Activated CD4-positive, alpha-beta T cell treated with anti-CD3 and anti-CD28 coated beads, Interleukin-2, amount 10 ng/mL, durations not matched to agents 24 days and 14 days (primary cell): ENCODE measurements at regions of chr18 and their contacts with region 1.

Region 1: DNA sequence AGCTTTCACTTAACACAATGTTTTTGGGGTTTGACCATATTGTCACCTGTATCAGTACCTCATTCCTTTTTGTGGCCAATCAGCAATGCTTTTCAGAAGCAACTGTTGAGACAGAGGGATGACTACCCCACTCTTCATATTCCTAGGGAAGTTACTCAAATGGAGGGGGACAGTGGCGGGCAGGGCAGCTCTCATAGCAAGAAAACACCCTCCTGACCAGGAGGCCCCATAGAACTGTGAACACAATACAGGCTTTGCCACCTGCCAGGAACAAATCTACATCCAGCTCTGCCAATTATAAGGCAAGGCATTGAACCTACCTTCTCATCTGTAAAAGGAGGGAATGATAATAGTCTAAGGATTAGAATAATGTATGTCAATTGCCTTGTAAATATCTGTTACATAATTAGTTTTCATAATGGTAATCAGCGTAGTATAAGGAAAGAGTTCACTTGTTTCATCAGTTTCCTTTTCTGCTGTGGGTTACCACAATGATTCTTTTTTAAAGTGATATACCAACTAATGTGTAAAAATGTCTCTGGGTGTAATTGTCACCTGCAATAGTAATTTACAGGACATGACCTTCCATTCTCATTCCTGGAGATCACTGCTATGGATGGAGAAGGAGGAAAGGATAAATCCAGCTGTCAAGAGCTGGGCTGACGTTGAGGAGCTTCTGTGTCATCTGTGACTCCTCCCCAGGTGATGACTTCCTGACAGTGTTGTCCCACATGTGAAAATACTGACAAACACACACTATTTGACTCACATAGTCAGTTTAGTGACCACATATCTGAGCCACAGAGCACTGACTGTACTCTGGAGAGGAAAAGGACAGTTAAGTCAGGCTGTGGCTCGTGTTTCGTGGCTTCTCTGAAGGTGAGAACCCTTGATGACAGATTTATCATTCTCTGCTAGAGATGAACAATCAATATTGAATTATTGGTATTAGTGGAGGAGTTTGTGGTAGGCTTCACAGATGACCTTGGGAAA is 13.5 kb downstream of the ALPK2 start:
- DNase-seq: peak; percentile 89
- H3K4me3 Mint-ChIP-seq: peak overlapping the region; percentile 68
- H3K27ac Mint-ChIP-seq: peak overlapping the region; percentile 94
- H3K4me1 Mint-ChIP-seq: peaks cover 24% of the 10 kb centered on the region
- H3K27me3 Mint-ChIP-seq: peaks cover 21% of the 10 kb centered on the region

Region 2: GRCh38 chr18:58649966-58650816 is 34.8 kb after region 1 on chr18:
- intact Hi-C with region 1: loop called (anchors 1 kb)
- DNase-seq: peak; percentile 92
- H3K4me3 Mint-ChIP-seq: peak overlapping the region; percentile 41
- H3K27ac Mint-ChIP-seq: peak overlapping the region; percentile 42
- H3K4me1 Mint-ChIP-seq: peaks cover 52% of the 10 kb centered on the region
- H3K27me3 Mint-ChIP-seq: peaks cover 3% of the 10 kb centered on the region

Region 3: GRCh38 chr18:58687871-58688308 is 72.5 kb after region 1 on chr18:
- intact Hi-C with region 1: loop called (anchors 1 kb)
- DNase-seq: peak; percentile 91
- H3K4me3 Mint-ChIP-seq: peak overlapping the region; percentile 51
- H3K27ac Mint-ChIP-seq: peak overlapping the region; percentile 92
- H3K4me1 Mint-ChIP-seq: peaks cover 57% of the 10 kb centered on the region
- H3K27me3 Mint-ChIP-seq: no peaks in the 10 kb centered on the region

Region 4: DNA sequence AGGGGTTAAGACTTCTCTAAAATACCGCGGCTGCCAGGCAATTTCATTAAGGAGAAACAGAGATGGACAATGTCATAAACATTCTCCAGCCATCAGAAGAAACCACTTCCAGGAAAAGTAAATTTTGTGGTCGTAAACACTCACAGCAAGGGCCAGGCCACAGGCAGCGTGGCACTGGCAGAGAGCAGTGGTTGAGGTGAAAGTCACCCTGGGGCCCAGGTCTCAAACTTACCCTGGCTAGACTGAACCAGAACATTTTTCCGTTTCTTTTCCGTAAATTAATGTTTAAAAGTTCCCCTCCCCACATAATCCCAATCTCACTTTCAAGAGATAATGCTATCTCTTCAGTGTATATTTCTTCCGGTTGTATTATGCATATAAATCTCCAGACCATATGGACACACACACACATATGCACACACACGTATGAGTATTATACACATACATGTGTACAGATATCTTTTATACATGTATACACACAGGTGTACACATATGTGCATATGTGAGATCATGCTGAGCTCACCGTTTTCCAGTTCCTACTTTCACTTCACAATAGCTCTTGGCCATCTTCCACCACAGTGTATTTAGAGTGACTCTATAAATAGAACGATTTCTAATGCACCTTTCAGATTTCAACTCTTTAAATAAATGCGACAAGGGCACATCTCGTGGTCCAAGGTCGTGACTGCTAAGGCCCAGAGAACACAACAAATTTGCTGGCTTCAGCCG is 146.0 kb after region 1 on chr18:
- intact Hi-C with region 1: loop called (anchors 5 kb)
- DNase-seq: peak; percentile 48
- H3K4me3 Mint-ChIP-seq: no peak overlapping the region
- H3K27ac Mint-ChIP-seq: no peak overlapping the region
- H3K4me1 Mint-ChIP-seq: peaks cover 13% of the 10 kb centered on the region
- H3K27me3 Mint-ChIP-seq: peaks cover 26% of the 10 kb centered on the region

Region 5: GRCh38 chr18:58915006-58915799 is 299.8 kb after region 1 on chr18:
- intact Hi-C with region 1: no loop called
- DNase-seq: no peak
- H3K4me3 Mint-ChIP-seq: no peak overlapping the region
- H3K27ac Mint-ChIP-seq: no peak overlapping the region
- H3K4me1 Mint-ChIP-seq: no peaks in the 10 kb centered on the region
- H3K27me3 Mint-ChIP-seq: peaks cover 3% of the 10 kb centered on the region

Region 6: DNA sequence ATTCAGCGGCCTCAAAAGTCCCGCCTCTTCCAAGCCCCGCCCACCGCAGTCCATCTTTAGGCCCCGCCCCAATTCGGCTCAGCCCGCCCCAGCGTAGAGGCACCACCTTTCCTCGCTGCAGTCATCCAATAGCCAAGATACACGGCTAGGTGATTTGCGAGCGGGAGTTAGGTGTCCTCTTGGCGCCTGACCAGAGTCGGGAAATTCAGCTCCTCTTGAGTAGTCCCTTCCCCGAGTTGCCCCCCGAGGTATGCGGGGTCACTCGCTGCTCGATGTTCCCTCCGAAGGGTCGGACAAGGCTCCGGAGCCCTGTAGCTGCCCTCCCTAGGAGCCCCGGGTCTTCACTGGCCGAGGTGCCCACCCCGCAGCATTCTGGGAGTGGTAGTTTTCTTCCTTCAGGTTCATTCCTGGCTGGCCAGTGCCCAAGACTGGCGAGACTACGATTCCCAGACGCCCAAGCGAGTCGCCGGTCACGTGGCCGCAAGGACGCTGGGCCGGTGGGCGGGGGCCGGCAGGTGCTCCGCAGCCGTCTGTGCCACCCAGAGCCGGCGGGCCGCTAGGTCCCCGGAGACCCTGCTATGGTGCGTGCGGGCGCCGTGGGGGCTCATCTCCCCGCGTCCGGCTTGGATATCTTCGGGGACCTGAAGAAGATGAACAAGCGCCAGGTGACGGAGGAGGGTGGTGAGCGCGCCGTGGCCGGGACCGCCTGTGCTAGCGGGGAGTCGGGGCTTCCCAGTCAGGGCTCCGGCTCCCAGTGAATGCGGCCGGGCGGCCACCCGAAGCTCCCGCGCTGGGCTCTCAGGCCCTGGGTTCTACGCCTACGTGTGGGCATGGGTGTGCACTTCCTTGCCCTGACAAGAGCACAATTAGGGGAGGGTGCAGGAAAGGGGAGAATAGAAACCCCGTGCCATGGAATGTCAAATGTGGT is 524.2 kb after region 1 on chr18 and contains the start of gene SEC11C:
- intact Hi-C with region 1: loop called (anchors 10 kb)
- DNase-seq: peak; percentile 99
- H3K4me3 Mint-ChIP-seq: peak within 1 kb of the TSS; percentile 97
- H3K27ac Mint-ChIP-seq: peak within 1 kb of the TSS; percentile 98
- H3K4me1 Mint-ChIP-seq: peaks cover 37% of the 10 kb centered on the region
- H3K27me3 Mint-ChIP-seq: peaks cover 27% of the 10 kb centered on the region
- total RNA-seq, gene SEC11C: 125 and 126 TPM in 2 replicates